Left ventricle myocardium inferior (tissue), 1 donor: ENCODE measurements at regions of chr1 and their contacts with region 1.

Region 1: GRCh38 chr1:179814546-179814838 is 63.1 kb downstream of the TOR1AIP2 start:
- DNase-seq: peak; percentile 66
- H3K4me3 ChIP-seq: peak overlapping the region; percentile 60
- H3K27ac ChIP-seq: peak overlapping the region; percentile 75
- H3K4me1 ChIP-seq: peaks cover 38% of the 10 kb centered on the region
- H3K27me3 ChIP-seq: peaks cover 36% of the 10 kb centered on the region
- CTCF ChIP-seq: no peak

Region 2: DNA sequence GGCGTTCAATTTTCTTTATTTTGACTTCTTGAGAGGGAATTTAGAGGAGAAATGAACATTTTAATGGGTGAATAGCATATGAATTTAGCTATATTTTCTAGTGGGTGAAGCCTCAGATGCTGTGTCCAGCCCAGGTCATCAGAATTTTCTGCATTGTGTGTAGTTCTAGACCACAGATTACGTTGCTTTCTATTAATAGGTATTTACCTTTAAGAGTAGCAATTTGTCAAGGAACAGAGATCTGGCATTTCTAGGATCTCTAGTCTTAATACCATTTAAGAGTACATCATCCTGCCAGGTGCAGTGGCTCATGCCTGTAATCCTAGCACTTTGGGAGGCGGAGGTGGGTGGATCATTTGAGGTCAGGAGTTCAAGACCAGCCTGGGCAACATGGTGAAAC is 202.1 kb before region 1 on chr1:
- intact Hi-C with region 1: no loop called
- DNase-seq: no peak
- H3K4me3 ChIP-seq: no peak overlapping the region
- H3K27ac ChIP-seq: no peak overlapping the region
- H3K4me1 ChIP-seq: no peaks in the 10 kb centered on the region
- H3K27me3 ChIP-seq: peaks cover 63% of the 10 kb centered on the region
- CTCF ChIP-seq: no peak

Region 3: DNA sequence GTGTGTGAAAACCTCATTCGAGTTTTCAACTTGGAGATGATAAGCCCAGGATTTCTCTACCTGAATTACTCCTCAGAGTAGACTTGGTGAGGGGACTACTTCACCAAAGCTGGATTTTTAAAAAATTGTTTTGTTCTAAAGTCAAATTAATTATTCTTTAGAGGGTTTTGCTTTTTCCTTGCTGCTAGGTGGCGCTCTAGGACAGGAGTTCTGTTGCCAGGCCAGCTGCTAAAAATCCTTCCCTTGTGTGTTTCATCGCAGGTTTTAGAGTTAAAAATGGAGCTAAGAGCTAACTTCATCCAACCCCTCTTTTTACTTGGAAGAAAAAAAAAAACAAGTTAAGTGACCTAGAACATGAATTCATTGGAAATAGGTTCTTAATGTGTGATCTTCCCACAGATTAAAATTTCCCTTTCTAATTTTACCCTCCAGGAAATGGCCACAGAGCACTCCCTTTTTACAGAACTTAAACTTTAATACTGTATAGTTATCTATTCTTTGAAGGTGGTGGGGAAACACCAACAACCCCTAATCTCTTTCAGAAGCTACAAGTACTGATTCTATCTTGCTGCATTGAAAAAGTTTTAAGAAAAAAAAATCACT is 108.1 kb before region 1 on chr1:
- intact Hi-C with region 1: loop called (anchors 2 kb)
- DNase-seq: peak; percentile 34
- H3K4me3 ChIP-seq: no peak overlapping the region
- H3K27ac ChIP-seq: no peak overlapping the region
- H3K4me1 ChIP-seq: peaks cover 28% of the 10 kb centered on the region
- H3K27me3 ChIP-seq: no peaks in the 10 kb centered on the region
- CTCF ChIP-seq: peak; percentile 76